Prostate gland (tissue), 2 donors: ENCODE measurements at regions of chr14 and their contacts with region 1.

Region 1: DNA sequence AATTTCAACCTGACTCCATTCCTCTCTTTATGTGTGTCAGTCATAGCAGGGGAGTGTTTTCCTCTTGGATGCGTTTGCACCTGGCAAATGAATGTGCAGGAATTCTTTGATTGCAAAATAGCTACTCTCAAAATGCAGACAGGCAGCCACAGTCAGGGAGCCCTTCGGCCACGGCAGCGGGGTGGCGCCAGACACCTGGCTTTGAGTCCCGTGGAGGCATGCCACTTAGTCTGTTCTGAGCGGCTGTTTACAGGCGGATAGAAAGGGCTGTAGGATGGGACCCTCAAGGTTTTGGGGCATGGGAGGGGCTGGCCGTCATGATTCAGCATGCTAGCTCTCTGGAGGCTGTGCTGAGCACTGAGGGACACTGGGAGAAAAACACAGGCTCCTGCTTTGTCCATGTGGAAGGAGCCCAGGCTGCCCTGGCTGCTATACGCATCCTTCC is 117.1 kb downstream of the SLC25A47 start:
- DNase-seq: peak; percentile 87
- H3K4me3 ChIP-seq: no peak overlapping the region
- H3K27ac ChIP-seq: peak overlapping the region; percentile 1 to 36
- H3K4me1 ChIP-seq: peaks cover 12% of the 10 kb centered on the region
- H3K27me3 ChIP-seq: no peaks in the 10 kb centered on the region
- CTCF ChIP-seq: peak; percentile 43 to 94 (median 82)
- POLR2A ChIP-seq: no peak

Region 2: GRCh38 chr14:100645192-100645990 is 205.2 kb after region 1 on chr14:
- intact Hi-C with region 1: loop called (anchors 5 kb)
- DNase-seq: peak; percentile 87
- H3K4me3 ChIP-seq: no peak overlapping the region
- H3K27ac ChIP-seq: no peak overlapping the region
- H3K4me1 ChIP-seq: no peaks in the 10 kb centered on the region
- H3K27me3 ChIP-seq: no peaks in the 10 kb centered on the region
- CTCF ChIP-seq: peak; percentile 74 to 86 (median 80)
- POLR2A ChIP-seq: no peak